Head of caudate nucleus (tissue), 42 donors: ENCODE measurements at regions of chr5 and their contacts with region 1.

Region 1: GRCh38 chr5:31921852-31922305 is 252.2 kb downstream of the GOLPH3 start:
- DNase-seq: no peak

Region 2: GRCh38 chr5:31825518-31826068 is 96.3 kb before region 1 on chr5:
- intact Hi-C with region 1: loop called (anchors 5 kb)
- DNase-seq: peak in 38 of 42 donors; percentile 30 to 87 (median 66)

Region 3: GRCh38 chr5:32027717-32028321 is 105.9 kb after region 1 on chr5:
- intact Hi-C with region 1: loop called (anchors 10 kb)
- DNase-seq: peak in 24 of 42 donors; percentile 25 to 79 (median 42)

Region 4: DNA sequence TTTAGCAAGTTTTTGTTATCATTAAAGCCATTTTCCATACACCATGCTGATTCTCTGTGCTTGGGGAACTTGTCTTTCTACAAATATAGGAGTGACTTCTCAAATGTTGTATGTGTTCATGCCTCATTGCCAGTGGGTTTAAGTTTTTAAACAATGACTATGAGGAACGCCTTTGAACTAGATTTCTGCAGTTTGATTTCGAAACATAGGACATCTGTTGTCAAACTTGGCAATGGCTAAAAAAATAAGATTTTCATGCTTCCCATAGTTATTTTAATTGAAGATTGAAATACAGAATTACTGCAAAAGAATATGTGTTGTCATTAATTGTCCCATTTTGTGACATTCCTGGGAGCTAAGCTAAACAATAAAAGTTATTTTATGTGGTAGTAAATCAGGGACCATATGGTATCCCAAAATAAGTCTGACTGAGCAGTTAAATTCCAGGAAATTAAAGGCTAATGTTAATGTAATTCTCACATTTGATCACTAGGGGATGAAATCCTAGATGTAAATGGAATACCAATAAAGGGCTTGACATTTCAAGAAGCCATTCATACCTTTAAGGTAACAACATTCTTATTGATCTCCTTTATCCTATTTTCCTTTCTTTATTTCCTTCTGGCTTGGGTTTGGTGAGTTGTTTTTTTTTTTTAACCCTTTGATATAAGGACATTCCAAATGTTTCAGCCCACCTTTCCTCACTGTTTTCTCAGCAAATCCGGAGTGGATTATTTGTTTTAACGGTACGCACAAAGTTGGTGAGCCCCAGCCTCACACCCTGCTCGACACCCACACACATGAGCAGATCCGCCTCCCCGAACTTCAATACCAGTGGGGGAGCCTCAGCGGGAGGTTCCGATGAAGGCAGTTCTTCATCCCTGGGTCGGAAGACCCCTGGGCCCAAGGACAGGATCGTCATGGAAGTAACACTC is 135.6 kb after region 1 on chr5:
- intact Hi-C with region 1: no loop called
- DNase-seq: peak in 2 of 42 donors; percentile 12 to 38